Heart right ventricle (tissue), 16 donors: ENCODE measurements at regions of chr10 and their contacts with region 1.

Region 1: DNA sequence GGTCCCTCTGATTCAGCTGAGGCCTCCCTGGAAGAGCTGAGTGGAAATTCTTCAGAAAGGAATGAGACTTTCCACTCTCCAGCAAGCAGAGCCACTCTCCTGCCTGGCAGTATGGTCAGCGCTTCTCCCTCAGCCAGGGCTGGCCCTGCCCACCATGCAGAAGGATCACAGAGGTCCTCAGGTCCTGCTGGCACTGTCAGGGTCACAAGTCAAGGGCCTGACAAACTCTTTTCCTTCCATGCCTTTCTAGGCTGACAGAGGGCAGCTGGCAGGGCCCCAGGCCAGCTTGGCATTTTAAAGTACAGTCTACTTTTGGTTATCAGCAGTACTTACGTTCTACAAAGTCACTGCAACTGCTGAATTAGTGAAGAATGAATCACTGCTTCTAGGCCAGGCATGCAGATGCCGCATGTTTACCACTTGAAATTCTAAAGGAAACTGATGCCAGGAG is 119.3 kb upstream of the FRMD4A start:
- DNase-seq: peak; percentile 36 to 69
- ATAC-seq: peak; percentile 34 to 92 (median 81)
- H3K4me3 ChIP-seq: no peak overlapping the region
- H3K27ac ChIP-seq: peak overlapping the region in 8 of 10 donors; percentile 9 to 67 (median 55)
- H3K4me1 ChIP-seq: peaks cover 0 to 12% (median 5%) of the 10 kb centered on the region in 9 donors
- H3K27me3 ChIP-seq: no peaks in the 10 kb centered on the region
- CTCF ChIP-seq: no peak

Region 2: DNA sequence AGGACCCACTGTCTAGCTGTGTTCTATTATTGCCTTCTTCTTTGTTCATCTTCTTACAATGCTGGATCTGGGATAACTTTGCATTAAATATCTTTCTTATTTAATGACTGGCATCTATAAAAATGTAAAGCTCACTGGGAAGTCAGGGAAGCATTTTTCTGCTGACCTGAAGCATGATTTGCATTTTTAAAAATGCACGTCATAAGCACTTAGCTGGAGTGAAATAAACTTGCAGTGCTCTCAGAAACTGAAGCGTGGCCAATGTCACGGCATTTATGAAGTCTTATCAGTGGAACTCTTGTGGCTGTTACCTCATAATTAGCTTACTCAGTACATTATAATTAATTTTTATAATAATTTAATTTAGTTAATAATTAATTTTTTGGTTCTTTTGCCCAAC is 178.4 kb before region 1 on chr10:
- intact Hi-C with region 1: no loop called
- DNase-seq: no peak
- ATAC-seq: no peak
- H3K4me3 ChIP-seq: no peak overlapping the region
- H3K27ac ChIP-seq: no peak overlapping the region
- H3K4me1 ChIP-seq: no peaks in the 10 kb centered on the region
- H3K27me3 ChIP-seq: peaks cover 0 to 8% (median 4%) of the 10 kb centered on the region in 7 donors
- CTCF ChIP-seq: no peak

Region 3: GRCh38 chr10:14397066-14397465 is 53.0 kb before region 1 on chr10:
- intact Hi-C with region 1: loop called in 1 of 10 experiments (anchors 1 kb)
- DNase-seq: peak; percentile 77 to 79
- ATAC-seq: peak; percentile 94 to 100 (median 97)
- H3K4me3 ChIP-seq: no peak overlapping the region
- H3K27ac ChIP-seq: peak overlapping the region in 6 of 10 donors; percentile 30 to 66 (median 44)
- H3K4me1 ChIP-seq: peaks cover 0 to 14% (median 3%) of the 10 kb centered on the region in 9 donors
- H3K27me3 ChIP-seq: peaks cover 0 to 3% (median 0%) of the 10 kb centered on the region in 7 donors
- CTCF ChIP-seq: no peak

Region 4: GRCh38 chr10:14466257-14466656 is 16.2 kb after region 1 on chr10:
- intact Hi-C with region 1: no loop called
- DNase-seq: peak in 1 of 2 donors; percentile 29
- ATAC-seq: peak in 2 of 8 donors; percentile 37 to 47
- H3K4me3 ChIP-seq: no peak overlapping the region
- H3K27ac ChIP-seq: no peak overlapping the region
- H3K4me1 ChIP-seq: no peaks in the 10 kb centered on the region
- H3K27me3 ChIP-seq: no peaks in the 10 kb centered on the region
- CTCF ChIP-seq: no peak